K562 (cell line): ENCODE measurements at regions of chr16 and their contacts with region 1.

Region 1: GRCh38 chr16:69286941-69287713 is 24.0 kb upstream of the VPS4A start:
- DNase-seq: peak; percentile 30 to 70 (median 33)
- ATAC-seq: peak; percentile 68
- H3K4me3 ChIP-seq: no peak overlapping the region
- H3K27ac ChIP-seq: no peak overlapping the region
- H3K4me1 ChIP-seq: peaks cover 2 to 4% of the 10 kb centered on the region in 2 experiments; a peak in 1 of 5 replicates
- H3K27me3 ChIP-seq: no peaks in the 10 kb centered on the region
- CTCF ChIP-seq: peak in 2 of 3 experiments; percentile 41 to 80; a peak in 4 of 6 replicates
- EP300 ChIP-seq: no peak
- POLR2A ChIP-seq: no peak
- RAD21 ChIP-seq: peak; percentile 70

Region 2: DNA sequence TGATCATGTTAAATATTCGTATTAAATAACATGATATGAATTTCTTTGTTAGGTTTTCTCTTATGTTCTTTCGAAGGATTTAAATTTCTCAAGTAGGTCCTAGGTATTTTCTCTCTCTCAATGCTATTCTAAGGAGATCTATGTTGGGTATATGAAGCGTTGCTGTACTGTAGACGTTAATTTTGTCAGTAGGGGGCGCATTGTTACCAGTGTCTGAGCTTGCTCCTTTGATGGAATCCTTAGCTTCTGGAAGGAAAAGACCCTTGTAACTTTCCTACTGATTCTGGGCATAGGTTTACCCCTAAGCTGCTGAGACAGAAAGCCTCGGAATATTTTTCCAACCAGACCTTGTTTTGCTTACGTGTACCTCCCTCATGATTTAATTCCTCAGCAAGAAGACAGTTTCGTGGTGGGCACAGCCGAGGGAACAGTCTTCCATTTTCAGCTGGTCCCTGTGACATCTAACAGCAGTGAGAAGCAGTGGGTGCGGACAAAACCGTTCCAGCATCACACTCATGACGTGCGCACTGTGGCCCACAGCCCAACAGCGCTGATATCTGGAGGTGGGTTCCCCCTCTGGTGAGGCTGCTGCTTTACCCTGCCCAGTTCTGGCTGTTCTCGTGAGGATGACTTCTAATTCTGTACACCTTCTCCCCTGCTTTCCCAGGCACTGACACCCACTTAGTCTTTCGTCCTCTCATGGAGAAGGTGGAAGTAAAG is 136.8 kb before region 1 on chr16:
- CTCF ChIA-PET with region 1: interaction called, 32 read pairs
- POLR2A ChIA-PET with region 1: interaction called, 3 read pairs
- in situ Hi-C with region 1: loop called (anchors 5 kb)
- intact Hi-C with region 1: loop called (anchors 1 kb)
- DNase-seq: peak; percentile 36 to 76 (median 48)
- ATAC-seq: peak; percentile 98
- H3K4me3 ChIP-seq: no peak overlapping the region
- H3K27ac ChIP-seq: no peak overlapping the region
- H3K4me1 ChIP-seq: no peaks in the 10 kb centered on the region
- H3K27me3 ChIP-seq: no peaks in the 10 kb centered on the region
- CTCF ChIP-seq: peak; percentile 53 to 89 (median 78); a peak in 5 of 6 replicates
- EP300 ChIP-seq: no peak
- POLR2A ChIP-seq: no peak
- RAD21 ChIP-seq: peak; percentile 73 to 86